Activated CD4-positive, alpha-beta T cell treated with anti-CD3 and anti-CD28 coated beads for 36 hours (primary cell): ENCODE measurements at regions of chr3 and their contacts with region 1.

Region 1: DNA sequence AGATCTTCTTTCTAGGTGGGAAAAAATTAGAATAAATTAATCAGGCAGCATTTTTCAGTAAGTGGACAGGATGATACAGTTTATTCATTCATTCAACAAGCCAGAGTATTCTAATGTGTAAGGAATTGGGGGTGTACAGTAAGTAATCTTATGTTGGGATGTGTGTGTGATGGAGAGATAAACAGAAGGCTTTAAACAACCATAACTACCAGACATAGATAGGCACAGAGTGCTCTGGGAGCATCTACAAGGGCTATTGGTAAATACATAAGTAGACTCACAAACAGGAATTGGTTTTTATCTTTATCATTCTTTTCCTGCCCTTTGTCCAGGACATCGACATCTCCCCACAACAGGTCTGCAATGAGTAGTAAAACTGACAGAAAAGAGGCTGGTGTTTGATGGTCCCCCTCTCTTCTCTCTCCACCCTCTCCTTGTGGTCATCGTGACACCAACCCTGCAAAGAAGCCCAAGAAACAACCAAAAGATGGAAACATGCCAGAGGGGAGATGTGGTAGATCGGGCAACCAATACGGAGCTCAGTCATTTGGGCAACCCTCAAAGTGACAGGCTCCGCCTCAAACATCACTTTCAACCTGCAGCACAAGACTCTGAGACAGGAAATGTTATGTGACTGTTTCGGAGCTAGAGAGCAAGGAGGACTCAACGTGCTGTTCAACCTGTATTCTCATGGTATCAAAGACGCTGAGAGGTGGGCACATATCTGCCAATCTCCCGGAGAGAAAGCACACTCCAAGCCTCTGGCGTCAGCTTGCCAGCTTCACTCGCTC is 28.7 kb upstream of the B3GNT5 start:
- DNase-seq: peak; percentile 71
- ATAC-seq: peak; percentile 96
- H3K4me3 Mint-ChIP-seq: peak overlapping the region; percentile 52
- H3K27ac Mint-ChIP-seq: peak overlapping the region; percentile 77
- H3K4me1 Mint-ChIP-seq: peaks cover 36% of the 10 kb centered on the region
- H3K27me3 Mint-ChIP-seq: no peaks in the 10 kb centered on the region

Region 2: GRCh38 chr3:182989407-182989965 is 234.9 kb before region 1 on chr3:
- CTCF ChIA-PET with region 1: no interaction called
- POLR2A ChIA-PET with region 1: no interaction called
- intact Hi-C with region 1: no loop called
- DNase-seq: no peak
- ATAC-seq: no peak
- H3K4me3 Mint-ChIP-seq: no peak overlapping the region
- H3K27ac Mint-ChIP-seq: no peak overlapping the region
- H3K4me1 Mint-ChIP-seq: no peaks in the 10 kb centered on the region
- H3K27me3 Mint-ChIP-seq: no peaks in the 10 kb centered on the region

Region 3: GRCh38 chr3:183178629-183179549 is 45.5 kb before region 1 on chr3:
- CTCF ChIA-PET with region 1: no interaction called
- POLR2A ChIA-PET with region 1: no interaction called
- intact Hi-C with region 1: no loop called
- DNase-seq: peak; percentile 82
- ATAC-seq: peak; percentile 82
- H3K4me3 Mint-ChIP-seq: peak overlapping the region; percentile 70
- H3K27ac Mint-ChIP-seq: no peak overlapping the region
- H3K4me1 Mint-ChIP-seq: peaks cover 7% of the 10 kb centered on the region
- H3K27me3 Mint-ChIP-seq: peaks cover 25% of the 10 kb centered on the region

Region 4: DNA sequence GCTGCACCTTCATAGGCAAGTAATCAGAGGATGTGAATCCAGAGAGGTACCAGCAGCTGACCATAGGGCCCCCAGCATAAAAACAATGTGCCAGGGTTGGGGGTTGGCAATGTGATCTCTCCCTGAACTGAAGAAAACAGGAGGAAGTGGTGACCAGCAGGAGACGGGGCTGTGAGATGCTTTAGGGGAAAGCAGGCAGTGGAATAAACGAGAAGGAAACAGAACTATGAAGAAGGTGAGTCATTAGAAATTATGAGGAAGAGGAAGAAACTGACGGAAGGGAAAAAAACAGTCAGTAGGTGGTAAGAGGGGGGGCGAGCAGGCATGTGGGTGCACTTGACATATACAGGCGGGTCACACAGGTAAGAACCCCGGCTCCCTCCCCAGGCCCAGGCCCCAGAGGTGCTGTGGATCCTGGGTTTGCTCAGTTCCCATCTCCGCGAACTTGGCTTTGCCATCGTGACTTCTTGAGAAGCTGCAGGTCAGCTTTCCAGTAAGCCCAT is 13.5 kb before region 1 on chr3:
- CTCF ChIA-PET with region 1: interaction called, 5 read pairs
- POLR2A ChIA-PET with region 1: interaction called, 6 read pairs
- intact Hi-C with region 1: loop called in 1 of 2 experiments (anchors 1 kb)
- DNase-seq: peak; percentile 68
- ATAC-seq: peak; percentile 66
- H3K4me3 Mint-ChIP-seq: no peak overlapping the region
- H3K27ac Mint-ChIP-seq: peak overlapping the region; percentile 72
- H3K4me1 Mint-ChIP-seq: peaks cover 63% of the 10 kb centered on the region
- H3K27me3 Mint-ChIP-seq: no peaks in the 10 kb centered on the region

Region 5: GRCh38 chr3:183252973-183253901 is 28.9 kb after region 1 on chr3 and contains the start of gene B3GNT5:
- CTCF ChIA-PET with region 1: interaction called, 4 read pairs
- POLR2A ChIA-PET with region 1: interaction called, 4 read pairs
- intact Hi-C with region 1: loop called in 1 of 2 experiments (anchors 2 kb)
- DNase-seq: peak; percentile 76
- ATAC-seq: peak; percentile 56
- H3K4me3 Mint-ChIP-seq: peak within 1 kb of the TSS; percentile 77
- H3K27ac Mint-ChIP-seq: peak within 1 kb of the TSS; percentile 79
- H3K4me1 Mint-ChIP-seq: peaks cover 29% of the 10 kb centered on the region
- H3K27me3 Mint-ChIP-seq: peaks cover 14% of the 10 kb centered on the region
- total RNA-seq, gene B3GNT5: 20.2 to 22.8 TPM